ENCODE measurements at regions of chr6 and their contacts with region 1.

Region 1: GRCh38 chr6:53484476-53485280 is 60.2 kb downstream of the GCLC start:
- DNase-seq: peak; percentile 84
- H3K4me3 ChIP-seq: peak overlapping the region in 1 of 4 donors; percentile 6
- H3K27ac ChIP-seq: no peak overlapping the region
- H3K4me1 ChIP-seq: peaks cover 0 to 11% (median 5%) of the 10 kb centered on the region in 4 donors
- H3K27me3 ChIP-seq: no peaks in the 10 kb centered on the region
- CTCF ChIP-seq: peak; percentile 82 to 96 (median 90)
- EP300 ChIP-seq: no peak
- POLR2A ChIP-seq: no peak

Region 2: DNA sequence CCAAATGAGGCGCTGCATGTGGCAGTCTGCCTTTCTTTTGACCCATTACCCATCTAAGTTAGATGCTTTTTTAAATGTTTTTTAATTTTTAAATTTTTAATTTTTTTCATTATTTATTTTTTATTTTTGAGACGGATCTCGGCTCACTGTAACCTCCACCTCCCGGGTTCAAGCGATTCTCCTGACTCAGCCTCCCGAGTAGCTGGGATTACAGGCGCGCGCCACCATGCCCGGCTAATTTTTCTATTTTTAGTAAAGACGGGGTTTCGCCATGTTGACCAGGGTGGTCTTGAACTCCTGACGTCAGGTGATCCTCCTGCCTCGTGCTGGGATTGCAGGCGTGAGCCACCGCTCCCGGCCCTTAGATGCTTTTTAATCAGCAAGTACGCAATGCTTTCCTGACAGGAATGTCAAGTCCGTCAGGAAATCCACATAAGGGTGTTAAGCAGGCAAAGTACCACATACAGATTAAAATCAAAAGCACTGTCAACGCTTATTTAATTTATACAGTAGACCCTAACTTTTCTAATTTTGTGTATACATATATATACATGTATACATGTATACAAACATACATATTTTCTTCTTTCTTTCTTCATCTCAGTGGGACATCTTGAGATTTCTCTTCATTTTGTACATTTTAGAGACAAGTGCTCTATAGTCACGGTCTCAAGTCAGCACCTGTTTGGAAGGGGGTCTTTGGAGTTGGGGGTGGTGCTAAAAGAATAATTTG is 488.6 kb before region 1 on chr6:
- intact Hi-C with region 1: loop called (anchors 2 kb)
- DNase-seq: peak; percentile 67
- H3K4me3 ChIP-seq: peak overlapping the region in 3 of 4 donors; percentile 20 to 65 (median 23)
- H3K27ac ChIP-seq: peak overlapping the region; percentile 89 to 96 (median 92)
- H3K4me1 ChIP-seq: peaks cover 0 to 26% (median 16%) of the 10 kb centered on the region in 4 donors
- H3K27me3 ChIP-seq: no peaks in the 10 kb centered on the region
- CTCF ChIP-seq: no peak
- EP300 ChIP-seq: no peak
- POLR2A ChIP-seq: no peak

Region 3: DNA sequence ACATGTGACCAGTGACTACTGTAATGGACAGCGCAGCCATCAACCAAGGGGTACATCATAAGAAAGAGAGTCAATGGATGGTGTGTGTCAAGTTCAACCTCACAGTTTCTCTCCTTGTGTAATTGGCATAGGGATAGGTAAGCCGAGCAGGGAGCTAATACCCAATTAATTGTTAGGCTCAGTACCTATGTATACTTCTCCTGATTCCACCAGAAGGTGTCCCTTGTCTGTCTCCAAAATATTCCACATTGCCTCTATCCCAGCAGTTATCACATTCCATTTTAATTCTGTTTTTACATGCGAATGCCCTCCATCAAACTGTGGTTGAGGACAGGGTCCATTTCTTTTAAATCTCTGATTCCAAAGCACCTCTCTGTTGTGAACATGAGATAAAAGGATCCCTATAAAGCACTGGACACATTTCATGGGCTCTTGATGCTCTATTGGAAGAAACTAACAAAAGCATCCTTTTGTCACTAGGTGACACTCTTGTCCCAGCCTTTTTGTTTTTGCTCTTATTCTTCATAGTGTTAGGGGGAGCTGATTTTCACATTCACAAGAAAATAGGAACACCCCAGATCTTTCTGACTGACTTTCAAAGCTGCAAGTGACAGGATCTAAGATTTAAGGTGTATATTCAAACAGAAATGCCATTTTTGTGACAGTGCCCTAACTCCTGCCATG is 380.5 kb before region 1 on chr6:
- intact Hi-C with region 1: loop called (anchors 2 kb)
- DNase-seq: no peak
- H3K4me3 ChIP-seq: no peak overlapping the region
- H3K27ac ChIP-seq: peak overlapping the region in 1 of 4 donors; percentile 45
- H3K4me1 ChIP-seq: peaks cover 0 to 20% (median 12%) of the 10 kb centered on the region in 4 donors
- H3K27me3 ChIP-seq: no peaks in the 10 kb centered on the region
- CTCF ChIP-seq: peak in 3 of 4 experiments; percentile 4 to 37 (median 17)
- EP300 ChIP-seq: no peak
- POLR2A ChIP-seq: no peak

Region 4: DNA sequence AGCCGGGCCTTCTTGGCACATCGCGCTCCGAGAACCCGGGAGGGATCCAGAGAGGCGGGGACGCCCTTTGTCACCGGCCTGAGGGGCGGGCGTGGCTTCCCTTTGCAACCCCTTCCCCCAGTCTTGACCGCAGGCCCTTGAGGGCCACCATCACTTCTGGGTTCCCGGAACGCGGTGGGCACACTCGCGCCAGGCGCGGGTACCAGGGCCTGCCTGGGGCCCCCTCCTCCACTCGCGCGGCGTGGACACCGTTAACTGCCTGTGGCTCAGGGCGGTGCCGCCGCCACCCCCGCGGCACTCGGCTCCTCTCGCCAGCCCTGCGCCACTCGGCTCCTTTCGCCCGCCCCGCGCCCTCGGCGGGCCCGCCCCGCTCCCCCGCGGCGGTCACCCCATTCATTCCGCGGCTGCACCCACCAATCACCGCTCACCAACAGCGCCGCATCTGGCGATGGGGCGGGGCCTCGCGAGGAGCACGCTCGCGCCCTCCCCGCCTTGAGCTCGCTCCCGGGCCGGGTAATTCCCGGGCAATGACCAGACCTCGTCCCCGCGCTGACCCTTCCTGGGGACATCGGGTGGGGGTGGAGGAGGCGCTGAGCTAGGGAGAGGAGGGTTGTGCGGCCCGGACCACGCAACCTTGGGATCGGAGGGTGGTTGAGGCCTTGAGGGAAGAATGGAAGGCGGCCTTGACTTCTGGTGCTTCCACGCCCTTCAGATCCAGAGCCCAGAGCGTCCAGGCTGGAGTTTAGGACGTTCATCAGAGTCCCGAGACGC is 125.4 kb before region 1 on chr6:
- intact Hi-C with region 1: loop called (anchors 10 kb)
- DNase-seq: peak; percentile 97
- H3K4me3 ChIP-seq: peak overlapping the region; percentile 51 to 72 (median 64)
- H3K27ac ChIP-seq: peak overlapping the region; percentile 89 to 96 (median 94)
- H3K4me1 ChIP-seq: peaks cover 0 to 16% (median 4%) of the 10 kb centered on the region in 4 donors
- H3K27me3 ChIP-seq: no peaks in the 10 kb centered on the region
- CTCF ChIP-seq: no peak
- EP300 ChIP-seq: peak in 2 of 4 donors; percentile 26 to 35
- POLR2A ChIP-seq: peak; percentile 28 to 53

Region 5: GRCh38 chr6:53410508-53411258 is 74.0 kb before region 1 on chr6:
- intact Hi-C with region 1: no loop called
- DNase-seq: no peak
- H3K4me3 ChIP-seq: no peak overlapping the region
- H3K27ac ChIP-seq: no peak overlapping the region
- H3K4me1 ChIP-seq: no peaks in the 10 kb centered on the region
- H3K27me3 ChIP-seq: no peaks in the 10 kb centered on the region
- CTCF ChIP-seq: peak in 3 of 4 experiments; percentile 30 to 42 (median 37)
- EP300 ChIP-seq: no peak
- POLR2A ChIP-seq: no peak

Region 6: GRCh38 chr6:53437557-53438202 is 47.0 kb before region 1 on chr6:
- intact Hi-C with region 1: loop called (anchors 2 kb)
- DNase-seq: no peak
- H3K4me3 ChIP-seq: no peak overlapping the region
- H3K27ac ChIP-seq: no peak overlapping the region
- H3K4me1 ChIP-seq: peaks cover 0 to 22% (median 19%) of the 10 kb centered on the region in 4 donors
- H3K27me3 ChIP-seq: no peaks in the 10 kb centered on the region
- CTCF ChIP-seq: peak in 2 of 4 experiments; percentile 17 to 24
- EP300 ChIP-seq: no peak
- POLR2A ChIP-seq: no peak

Measured in sigmoid colon (tissue), 7 donors.